Activated naive CD8-positive, alpha-beta T cell treated with anti-CD3 and anti-CD28 coated beads, Interleukin-2, amount 10 ng/mL, durations not matched to agents 7 days and 5 days (primary cell): ENCODE measurements at regions of chr17 and their contacts with region 1.

Region 1: DNA sequence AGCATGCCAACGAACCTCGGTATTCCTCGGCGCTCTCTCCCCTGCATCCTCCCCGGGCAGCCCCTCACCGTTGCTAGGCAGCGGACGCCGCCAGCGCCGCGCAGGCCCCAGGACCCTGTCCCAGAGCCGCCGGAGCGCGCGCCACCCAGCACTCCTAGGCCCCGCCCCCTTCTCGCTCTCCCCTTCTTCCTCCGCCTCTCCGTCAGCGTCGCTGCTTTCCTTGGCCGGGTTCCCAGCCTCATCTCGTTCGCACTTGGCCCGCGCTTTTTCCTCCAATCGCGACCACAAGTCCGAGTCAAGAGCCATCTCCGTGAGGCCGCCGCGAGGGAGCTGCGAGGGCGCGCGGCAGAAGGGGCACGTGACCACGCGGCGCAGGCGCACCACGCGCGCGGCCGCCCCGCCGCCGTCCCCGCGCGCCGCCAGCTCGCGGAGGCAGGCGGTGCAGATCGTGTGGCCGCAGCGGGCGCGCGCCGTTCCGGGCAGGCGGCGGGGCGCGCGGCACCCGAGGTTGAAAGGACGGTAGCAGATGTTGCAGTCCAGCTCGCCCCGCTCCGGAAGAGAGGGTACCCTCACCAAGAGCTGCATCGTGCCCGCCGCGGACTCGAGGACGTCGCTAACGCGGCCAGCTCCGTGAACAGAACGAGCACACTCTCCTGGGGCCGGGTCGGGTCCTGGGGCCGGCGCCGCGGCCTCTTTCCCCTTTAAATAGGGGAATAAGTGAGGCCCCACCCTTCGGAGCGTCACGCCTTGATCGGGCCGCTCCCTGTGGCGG is at the start of gene RNF227:
- DNase-seq: peak; percentile 90
- ATAC-seq: peak; percentile 81
- H3K4me3 Mint-ChIP-seq: peak within 1 kb of the TSS; percentile 92
- H3K27ac Mint-ChIP-seq: peak within 1 kb of the TSS; percentile 91
- H3K4me1 Mint-ChIP-seq: peaks cover 25% of the 10 kb centered on the region
- H3K27me3 Mint-ChIP-seq: no peaks in the 10 kb centered on the region
- total RNA-seq, gene RNF227: 4.5 to 5.5 TPM

Region 2: DNA sequence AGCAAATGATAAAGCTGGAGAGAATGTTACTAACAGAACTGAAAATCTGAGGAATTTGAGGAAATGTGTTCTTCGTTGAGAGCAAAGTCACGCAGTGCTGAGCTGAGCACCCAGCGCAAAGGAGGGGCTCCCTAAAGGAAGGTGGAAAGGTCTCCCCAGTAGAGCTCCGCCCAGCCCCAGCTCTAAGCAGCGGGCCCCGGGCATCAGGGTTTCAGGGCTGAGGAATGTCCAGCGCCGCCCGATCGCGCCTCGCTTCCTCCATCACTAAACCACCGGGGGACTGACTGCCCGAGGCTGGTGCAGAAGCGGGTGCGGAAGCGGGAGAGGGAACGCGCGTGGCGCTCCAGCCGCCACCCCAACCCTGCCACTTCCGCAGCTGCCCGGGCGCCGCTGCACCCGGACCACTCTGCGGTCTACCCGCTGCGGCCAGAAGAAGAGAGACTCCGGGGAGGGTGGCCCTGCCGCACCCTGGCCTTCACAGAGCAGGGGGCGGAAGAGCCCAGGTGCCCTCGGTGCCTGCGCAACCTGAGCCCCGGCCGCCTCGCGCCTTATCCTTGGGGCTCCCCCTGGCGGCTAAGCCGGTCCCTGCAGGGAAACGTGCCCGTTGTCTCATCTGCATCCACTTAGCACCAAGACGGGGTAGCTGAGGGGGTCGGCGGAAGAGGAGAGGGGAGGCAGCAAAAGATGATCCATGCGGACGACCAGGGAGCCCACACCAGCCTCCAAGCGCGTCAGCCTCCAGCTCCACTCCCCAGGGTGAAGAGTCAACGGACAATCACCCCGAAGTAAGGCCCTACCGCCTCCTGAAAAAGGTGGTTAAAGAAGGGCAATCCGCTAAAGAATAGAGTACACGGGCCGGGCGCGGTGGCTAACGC is 74.2 kb after region 1 on chr17:
- POLR2A ChIA-PET with region 1: interaction called, 44 read pairs
- DNase-seq: peak; percentile 97
- ATAC-seq: peak; percentile 85
- H3K4me3 Mint-ChIP-seq: peak overlapping the region; percentile 75
- H3K27ac Mint-ChIP-seq: peak overlapping the region; percentile 84
- H3K4me1 Mint-ChIP-seq: peaks cover 14% of the 10 kb centered on the region
- H3K27me3 Mint-ChIP-seq: peaks cover 28% of the 10 kb centered on the region